Right ventricle myocardium superior (tissue), 1 donor: ENCODE measurements at regions of chr10 and their contacts with region 1.

Region 1: DNA sequence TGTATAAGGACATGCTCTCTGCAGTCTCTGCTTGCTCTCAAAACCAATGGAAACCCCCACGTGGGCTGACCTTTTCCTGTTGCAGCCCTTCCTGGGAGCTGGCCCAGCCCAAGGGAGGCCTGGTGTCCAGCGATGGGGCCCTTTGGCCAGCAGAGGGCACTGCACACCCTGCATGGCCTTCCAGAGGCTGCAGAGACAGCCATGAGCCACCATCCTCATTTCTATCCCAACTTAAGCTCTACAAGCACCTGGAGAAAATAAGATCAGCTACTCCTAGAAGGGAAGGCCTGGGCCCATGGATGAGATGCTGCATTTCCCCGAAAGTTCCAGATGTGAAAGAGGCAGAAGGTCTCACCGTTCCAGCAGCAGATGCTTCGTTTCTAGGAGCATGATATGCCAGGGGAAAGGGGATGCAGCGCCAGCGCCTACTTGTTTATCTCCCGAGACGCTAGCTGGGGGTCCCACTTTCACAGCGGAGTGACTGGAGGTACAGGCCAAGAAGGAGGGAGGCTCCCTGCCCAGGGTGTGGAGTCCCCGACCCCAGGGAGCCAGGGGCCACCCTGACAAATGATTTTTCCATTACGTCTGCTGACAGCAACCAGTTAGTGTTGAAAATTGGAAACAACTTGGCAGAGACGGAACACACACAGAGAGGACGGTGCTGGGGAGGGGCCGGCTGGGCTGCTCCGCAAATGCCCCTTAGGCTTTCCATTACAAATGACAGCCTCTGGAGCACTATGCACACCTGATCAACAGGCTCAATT is 106.4 kb downstream of the ZRANB1 start:
- DNase-seq: peak; percentile 92
- ATAC-seq: peak; percentile 94

Region 2: DNA sequence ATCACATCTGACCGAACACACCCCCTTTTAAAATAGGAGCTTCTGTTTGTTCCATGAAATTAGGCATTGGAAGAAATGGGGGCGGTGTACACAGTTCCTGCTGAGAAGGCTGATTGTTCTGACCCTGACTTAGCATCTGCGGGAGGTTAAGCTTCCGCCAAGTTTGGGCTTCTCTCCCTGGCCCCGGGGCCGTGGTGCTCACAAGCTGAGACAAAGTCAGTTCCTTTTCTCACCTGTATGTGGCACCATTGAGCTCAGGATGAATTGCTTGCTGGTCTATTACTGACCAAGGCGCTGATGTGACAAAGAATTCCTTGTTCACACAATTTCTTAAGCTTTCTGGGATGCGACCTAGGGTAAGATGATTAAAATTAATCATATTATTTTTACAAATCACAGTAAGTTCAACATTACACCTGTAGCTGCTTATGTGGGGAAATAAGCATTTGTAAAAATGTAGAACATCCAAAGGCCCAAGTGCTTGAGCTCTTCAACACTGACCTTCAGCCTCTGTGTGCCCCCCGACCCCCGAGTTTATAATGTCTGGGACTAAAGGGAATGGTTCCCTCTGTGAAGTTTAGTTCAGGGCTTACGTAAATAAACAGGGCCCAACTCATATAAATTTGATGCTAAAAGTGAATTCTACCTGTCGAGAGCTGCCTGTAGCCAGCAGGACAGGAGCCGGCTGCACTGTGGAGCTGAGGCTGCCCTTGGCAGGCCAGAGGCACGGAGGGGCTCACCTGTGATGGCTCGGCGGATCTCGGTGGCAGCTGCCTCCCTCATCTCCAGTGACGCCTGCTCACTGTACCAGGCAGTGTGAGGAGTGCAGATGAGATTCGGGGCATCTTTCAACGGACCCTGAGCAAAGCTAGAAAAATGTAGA is 55.6 kb before region 1 on chr10:
- intact Hi-C with region 1: loop called (anchors 10 kb)
- DNase-seq: peak; percentile 73
- ATAC-seq: peak; percentile 80

Region 3: GRCh38 chr10:125343118-125343925 is 295.0 kb after region 1 on chr10:
- intact Hi-C with region 1: loop called (anchors 10 kb)
- DNase-seq: no peak
- ATAC-seq: no peak